K562 (cell line): ENCODE measurements at regions of chr10 and their contacts with region 1.

Region 1: DNA sequence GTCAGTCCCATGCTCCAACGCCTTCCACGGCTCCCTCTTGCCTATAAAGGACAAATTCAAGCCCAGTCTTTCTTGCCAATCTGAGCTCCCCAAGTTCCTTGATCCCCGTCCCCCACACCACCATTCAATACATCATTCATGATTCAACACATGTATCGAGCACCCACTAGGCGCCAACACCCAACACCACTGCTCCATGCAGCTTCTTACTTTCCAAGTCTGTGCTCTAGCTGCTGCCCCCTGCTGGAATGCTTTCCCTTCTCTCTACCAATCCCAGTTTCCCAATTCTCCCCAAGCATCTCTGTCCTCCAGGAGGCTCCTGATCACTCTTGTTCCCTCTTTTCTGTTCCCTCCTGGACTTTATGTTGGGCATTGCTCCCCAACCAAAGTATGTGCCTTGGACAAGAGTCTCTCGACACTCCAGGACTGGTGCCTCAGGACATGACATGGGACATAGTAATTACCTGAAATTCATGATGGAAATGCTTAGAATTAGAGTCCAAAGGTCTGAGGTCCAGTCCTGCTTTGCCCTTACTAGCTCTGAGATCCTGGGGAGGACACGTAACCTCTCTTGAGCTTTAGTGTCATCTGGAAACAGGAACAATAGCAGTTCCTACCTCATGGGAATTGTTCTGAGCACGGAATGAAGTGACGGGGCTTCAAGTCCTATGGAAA is 172.7 kb downstream of the NEURL1 start:
- DNase-seq: peak; percentile 33 to 57 (median 45)
- ATAC-seq: peak; percentile 41; the same call in 2 of the 3 replicates
- H3K4me3 ChIP-seq: no peak overlapping the region
- H3K27ac ChIP-seq: no peak overlapping the region
- H3K4me1 ChIP-seq: peaks cover 14 to 36% of the 10 kb centered on the region in 2 experiments
- H3K27me3 ChIP-seq: no peaks in the 10 kb centered on the region
- CTCF ChIP-seq: peak; percentile 56 to 72 (median 64)
- EP300 ChIP-seq: no peak
- POLR2A ChIP-seq: no peak
- RAD21 ChIP-seq: peak in 1 of 2 experiments; percentile 46; a peak in 2 of 4 replicates

Region 2: GRCh38 chr10:102678842-102679289 is 987.4 kb before region 1 on chr10:
- CTCF ChIA-PET with region 1: no interaction called
- POLR2A ChIA-PET with region 1: no interaction called
- in situ Hi-C with region 1: no loop called
- intact Hi-C with region 1: no loop called
- DNase-seq: peak; percentile 61 to 76 (median 68)
- ATAC-seq: peak; percentile 92
- H3K4me3 ChIP-seq: no peak overlapping the region
- H3K27ac ChIP-seq: no peak overlapping the region
- H3K4me1 ChIP-seq: peaks cover 18 to 27% of the 10 kb centered on the region in 2 experiments
- H3K27me3 ChIP-seq: no peaks in the 10 kb centered on the region
- CTCF ChIP-seq: peak; percentile 76 to 82 (median 80)
- EP300 ChIP-seq: no peak
- POLR2A ChIP-seq: no peak
- RAD21 ChIP-seq: peak; percentile 38 to 72

Region 3: GRCh38 chr10:103618575-103619423 is 47.4 kb before region 1 on chr10:
- CTCF ChIA-PET with region 1: no interaction called
- POLR2A ChIA-PET with region 1: no interaction called
- in situ Hi-C with region 1: no loop called
- intact Hi-C with region 1: loop called (anchors 5 kb)
- DNase-seq: peak; percentile 75 to 90 (median 84)
- ATAC-seq: peak; percentile 77
- H3K4me3 ChIP-seq: peak overlapping the region; percentile 13; the same call in 1 of the 2 replicates
- H3K27ac ChIP-seq: peak overlapping the region; percentile 70
- H3K4me1 ChIP-seq: peaks cover 58 to 83% of the 10 kb centered on the region in 2 experiments
- H3K27me3 ChIP-seq: no peaks in the 10 kb centered on the region
- CTCF ChIP-seq: no peak
- EP300 ChIP-seq: peak; percentile 94
- POLR2A ChIP-seq: no peak
- RAD21 ChIP-seq: no peak; a peak in 1 of 4 replicates